AG04449 (cell line): ENCODE measurements at regions of chr12 and their contacts with region 1.

Region 1: GRCh38 chr12:13211859-13212664 is 15.5 kb downstream of the EMP1 start:
- DNase-seq: no peak
- H3K4me3 ChIP-seq: no peak overlapping the region
- CTCF ChIP-seq: peak; percentile 70

Region 2: GRCh38 chr12:12975322-12976077 is 236.6 kb before region 1 on chr12:
- CTCF ChIA-PET with region 1: interaction called, 23 read pairs
- POLR2A ChIA-PET with region 1: no interaction called
- DNase-seq: no peak
- H3K4me3 ChIP-seq: no peak overlapping the region
- CTCF ChIP-seq: peak; percentile 52

Region 3: GRCh38 chr12:13008741-13009380 is 203.2 kb before region 1 on chr12:
- CTCF ChIA-PET with region 1: interaction called, 20 read pairs
- POLR2A ChIA-PET with region 1: no interaction called
- DNase-seq: no peak
- H3K4me3 ChIP-seq: no peak overlapping the region
- CTCF ChIP-seq: no peak

Region 4: GRCh38 chr12:13044002-13044905 is 167.8 kb before region 1 on chr12 and contains the start of gene FAM234B:
- CTCF ChIA-PET with region 1: interaction called, 18 read pairs
- POLR2A ChIA-PET with region 1: no interaction called
- DNase-seq: no peak
- H3K4me3 ChIP-seq: peak within 1 kb of the TSS; percentile 94
- CTCF ChIP-seq: peak; percentile 16

Region 5: DNA sequence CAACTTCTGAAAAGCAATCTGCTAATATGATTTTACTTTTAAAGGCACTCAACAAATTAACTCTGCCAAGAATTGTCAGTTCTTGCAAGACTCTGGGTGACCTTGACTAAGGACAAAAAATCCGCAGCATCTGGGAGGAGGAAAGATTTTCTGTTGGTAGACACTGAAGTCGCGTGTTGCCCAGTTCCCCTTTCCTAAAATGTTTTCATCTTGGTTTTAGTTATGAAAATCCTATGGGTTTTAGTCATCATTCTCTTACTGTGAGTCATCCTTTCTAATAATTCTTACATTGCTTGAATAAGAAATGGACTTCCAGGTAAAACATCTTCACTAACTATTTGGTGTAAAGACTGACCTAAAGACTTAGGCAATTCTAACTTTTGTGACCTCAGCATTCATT is 117.7 kb before region 1 on chr12:
- CTCF ChIA-PET with region 1: interaction called, 123 read pairs
- POLR2A ChIA-PET with region 1: interaction called, 3 read pairs
- DNase-seq: no peak
- H3K4me3 ChIP-seq: no peak overlapping the region
- CTCF ChIP-seq: no peak

Region 6: DNA sequence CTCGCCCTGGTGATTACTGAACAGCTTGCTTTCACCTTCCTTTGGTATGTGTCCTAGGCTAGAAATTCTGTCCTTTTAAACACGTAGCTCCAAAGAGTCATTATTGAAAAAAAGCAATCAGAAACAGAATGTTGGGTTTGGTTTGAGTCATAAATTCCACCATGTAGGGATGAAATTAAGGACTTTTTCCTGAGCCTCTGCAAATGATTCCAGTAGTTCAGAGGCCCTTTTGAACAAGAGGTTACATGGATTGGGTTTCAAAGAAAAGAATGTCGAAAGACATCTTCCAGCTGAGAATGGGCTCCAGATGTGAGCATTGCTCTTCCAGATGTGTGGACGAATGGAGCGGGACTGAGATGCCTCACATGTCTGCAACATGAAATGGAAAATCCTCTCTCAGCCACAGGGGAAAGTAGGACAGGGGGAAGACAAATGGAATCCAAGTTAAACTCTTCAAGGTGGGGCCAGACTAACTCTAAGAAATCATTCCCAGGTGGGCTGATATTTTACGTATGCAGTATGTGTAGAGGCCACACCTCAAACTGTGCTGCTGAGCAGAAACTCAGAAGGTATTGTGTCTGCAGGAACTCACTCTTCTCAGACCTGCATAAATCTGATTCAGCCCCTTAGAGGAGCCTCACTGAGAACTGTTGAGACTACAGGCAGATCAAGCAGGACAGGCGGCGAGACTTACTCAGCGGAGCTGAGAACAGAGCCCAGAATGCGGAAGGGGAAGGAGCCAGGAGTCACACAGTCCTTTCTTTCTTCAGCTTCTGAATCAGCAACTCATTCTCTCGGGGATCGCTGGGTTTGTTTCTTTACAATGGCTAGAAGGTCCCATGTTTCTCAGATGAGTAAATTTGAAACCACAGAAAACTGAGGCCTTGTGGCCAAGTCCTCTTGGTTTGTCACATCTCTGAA is 38.8 kb before region 1 on chr12:
- CTCF ChIA-PET with region 1: interaction called, 19 read pairs
- POLR2A ChIA-PET with region 1: no interaction called
- DNase-seq: peak; percentile 83
- H3K4me3 ChIP-seq: peak overlapping the region; percentile 29; the same call in 1 of the 2 replicates
- CTCF ChIP-seq: no peak

Region 7: DNA sequence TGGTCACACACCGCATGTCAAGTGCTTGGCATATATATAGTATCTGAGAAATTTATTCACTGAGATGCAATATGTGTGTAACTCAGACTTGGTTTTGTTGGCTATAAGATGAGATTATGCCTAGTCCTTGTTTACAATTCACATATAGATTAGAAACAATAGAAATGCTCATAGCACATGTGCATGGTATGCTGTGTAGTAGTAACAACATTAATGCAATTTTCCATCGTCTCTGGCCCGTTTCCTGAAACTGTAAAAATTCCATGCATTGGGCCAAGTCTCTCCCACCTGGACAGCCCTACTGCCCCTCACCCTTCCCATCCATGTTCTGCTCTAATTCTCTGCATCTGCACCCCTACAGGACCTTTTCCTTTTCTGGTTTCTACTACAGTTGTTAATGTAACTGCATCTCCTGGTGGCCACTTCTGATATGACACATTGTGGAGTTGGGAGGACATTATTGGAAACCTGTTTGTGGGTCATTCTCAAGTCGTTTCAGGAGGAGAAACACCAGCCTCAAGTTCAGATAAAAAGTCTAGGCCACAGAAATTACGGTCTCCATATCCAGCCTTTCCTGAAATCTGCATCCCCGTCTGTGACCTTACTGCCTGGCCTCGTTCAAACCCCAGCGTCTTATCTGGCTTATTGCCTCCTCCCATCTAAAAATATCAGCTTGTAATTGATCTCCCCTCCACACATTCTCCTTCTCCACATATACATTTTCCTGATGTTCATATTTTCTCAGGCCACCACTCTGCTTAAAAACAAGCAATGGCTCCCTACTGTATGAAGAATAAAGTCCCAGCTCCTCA is 22.0 kb after region 1 on chr12:
- CTCF ChIA-PET with region 1: interaction called, 19 read pairs
- POLR2A ChIA-PET with region 1: no interaction called
- DNase-seq: no peak
- H3K4me3 ChIP-seq: no peak overlapping the region
- CTCF ChIP-seq: peak; percentile 80

Region 8: DNA sequence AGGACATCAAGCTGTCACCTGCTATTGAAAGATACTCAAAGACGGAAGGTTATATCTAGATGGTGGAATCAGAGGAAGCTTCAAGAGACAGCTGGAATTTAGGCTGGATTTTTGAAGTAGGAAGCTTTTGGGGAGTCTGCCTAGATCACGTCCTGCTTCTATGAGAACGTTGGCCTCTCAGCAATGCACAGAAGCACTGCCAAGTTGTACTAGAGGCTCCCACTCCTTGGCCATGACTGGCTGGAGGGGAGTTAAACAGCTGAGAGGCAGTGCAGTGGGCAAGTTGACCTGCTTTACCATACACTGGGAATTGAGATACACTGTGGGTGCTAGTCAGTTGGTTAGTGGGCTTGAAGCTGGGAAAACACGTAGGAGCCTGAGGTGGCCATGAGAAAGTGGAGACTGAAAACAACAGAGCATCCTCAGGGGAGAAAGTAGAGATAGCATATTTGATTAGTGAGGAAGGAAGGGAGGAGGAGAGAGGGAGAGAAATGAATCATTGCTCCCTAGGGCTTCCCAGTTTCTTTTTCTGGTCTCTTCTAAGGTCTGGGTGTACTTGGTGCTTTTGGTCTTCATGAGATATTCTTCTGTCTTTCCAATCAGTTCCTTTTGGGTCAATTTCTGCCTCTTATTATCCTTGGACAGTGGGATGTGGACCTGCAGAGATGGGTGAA is 95.2 kb after region 1 on chr12:
- CTCF ChIA-PET with region 1: no interaction called
- POLR2A ChIA-PET with region 1: no interaction called
- DNase-seq: no peak
- H3K4me3 ChIP-seq: no peak overlapping the region
- CTCF ChIP-seq: no peak